GM23248 (cell line): ENCODE measurements at regions of chr2 and their contacts with region 1.

Region 1: DNA sequence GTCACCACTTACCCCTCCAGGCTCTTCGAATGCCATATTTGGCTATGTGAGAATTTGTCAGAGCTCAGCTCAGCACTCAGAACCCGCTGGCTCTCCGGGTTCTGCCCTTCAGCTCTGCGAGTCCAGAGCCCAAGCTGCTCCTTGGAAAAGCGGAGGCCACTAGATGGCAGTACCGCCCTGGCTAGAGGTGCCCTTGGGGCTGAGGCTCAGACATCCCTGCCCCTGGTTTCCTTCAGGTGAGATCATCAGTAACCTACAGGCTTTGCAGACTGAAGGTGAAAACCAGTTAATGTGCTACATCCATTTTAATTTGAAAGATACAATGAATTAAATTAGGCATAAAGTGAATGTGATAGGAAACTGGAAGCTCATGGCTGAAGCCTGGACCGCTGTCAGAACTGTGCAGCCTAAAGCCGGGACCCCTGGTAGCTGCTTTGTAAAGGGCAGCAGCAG is 285.6 kb downstream of the AGAP1 start:
- DNase-seq: peak; percentile 82
- H3K4me3 ChIP-seq: no peak overlapping the region
- H3K27ac ChIP-seq: no peak overlapping the region
- H3K4me1 ChIP-seq: no peaks in the 10 kb centered on the region
- H3K27me3 ChIP-seq: no peaks in the 10 kb centered on the region

Region 2: DNA sequence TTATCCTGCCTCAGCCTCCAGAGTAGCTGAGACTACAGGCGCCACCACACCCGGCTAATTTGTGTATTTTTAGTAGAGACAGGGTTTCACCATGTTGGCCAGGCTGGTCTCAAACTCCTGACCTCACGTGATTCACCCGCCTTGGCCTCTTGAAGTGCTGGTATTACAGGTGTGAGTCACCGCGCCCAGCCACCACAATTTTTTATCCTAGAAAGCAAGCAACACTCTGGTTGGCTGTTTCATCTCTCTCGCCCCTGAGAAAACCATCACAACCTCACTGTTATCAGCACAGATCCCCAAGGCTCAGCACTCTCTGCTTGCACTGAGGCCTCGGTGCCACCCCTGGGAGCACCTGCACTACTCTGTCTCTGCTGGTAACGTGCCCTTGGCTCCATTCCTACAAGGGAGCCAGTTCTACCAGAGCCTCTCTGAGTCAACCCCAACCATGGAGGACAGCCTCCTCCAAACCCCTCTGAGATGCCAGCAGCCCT is 420.4 kb before region 1 on chr2:
- in situ Hi-C with region 1: no loop called
- DNase-seq: peak; percentile 67
- H3K4me3 ChIP-seq: no peak overlapping the region
- H3K27ac ChIP-seq: no peak overlapping the region
- H3K4me1 ChIP-seq: peaks cover 10% of the 10 kb centered on the region; the same call in 1 of the 2 replicates
- H3K27me3 ChIP-seq: no peaks in the 10 kb centered on the region; the same call in 1 of the 2 replicates

Region 3: GRCh38 chr2:235595422-235596010 is 184.0 kb before region 1 on chr2:
- in situ Hi-C with region 1: no loop called
- DNase-seq: peak; percentile 88
- H3K4me3 ChIP-seq: no peak overlapping the region
- H3K27ac ChIP-seq: no peak overlapping the region
- H3K4me1 ChIP-seq: no peaks in the 10 kb centered on the region
- H3K27me3 ChIP-seq: no peaks in the 10 kb centered on the region

Region 4: DNA sequence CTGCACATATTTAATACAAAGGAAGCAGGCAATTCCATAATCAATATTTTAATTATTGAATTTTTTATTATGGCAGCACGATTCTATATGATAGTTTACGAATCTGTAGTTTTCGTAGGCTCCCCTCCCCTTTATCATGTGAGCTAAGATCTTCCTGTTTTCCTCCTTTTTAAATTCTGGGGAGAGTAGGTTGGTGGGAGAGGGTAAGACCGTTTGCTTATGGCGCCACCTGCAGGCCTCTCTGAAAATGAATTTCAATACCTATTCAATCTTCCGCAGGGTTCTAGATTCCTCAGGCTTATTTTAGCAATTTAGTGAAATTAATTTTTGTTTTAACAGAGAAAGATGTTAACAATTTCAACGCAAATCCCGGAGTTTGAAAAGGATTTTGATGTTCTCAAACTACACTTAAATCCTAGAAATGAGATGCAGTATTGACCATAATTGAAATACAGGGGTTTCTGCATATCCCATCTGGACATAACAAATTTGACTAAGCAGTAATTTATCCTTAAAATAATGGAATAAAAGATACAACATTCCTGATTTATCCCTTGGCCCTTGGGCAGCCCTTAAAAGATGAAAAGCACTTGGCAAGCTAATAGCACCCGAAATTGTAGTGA is 401.5 kb after region 1 on chr2:
- in situ Hi-C with region 1: loop called (anchors 10 kb)
- DNase-seq: peak; percentile 65
- H3K4me3 ChIP-seq: no peak overlapping the region
- H3K27ac ChIP-seq: no peak overlapping the region
- H3K4me1 ChIP-seq: peaks cover 21% of the 10 kb centered on the region; the same call in 1 of the 2 replicates
- H3K27me3 ChIP-seq: peaks cover 17% of the 10 kb centered on the region; the same call in 1 of the 2 replicates

Region 5: GRCh38 chr2:237060534-237061312 is 1281.3 kb after region 1 on chr2:
- in situ Hi-C with region 1: loop called (anchors 10 kb)
- DNase-seq: peak; percentile 80
- H3K4me3 ChIP-seq: no peak overlapping the region
- H3K27ac ChIP-seq: no peak overlapping the region
- H3K4me1 ChIP-seq: peaks cover 3% of the 10 kb centered on the region; the same call in 1 of the 2 replicates
- H3K27me3 ChIP-seq: no peaks in the 10 kb centered on the region